Thyroid gland (tissue), 4 donors: ENCODE measurements at regions of chr1 and their contacts with region 1.

Region 1: GRCh38 chr1:94329986-94330385 is 88.2 kb upstream of the ABCD3 start:
- DNase-seq: no peak
- H3K4me3 ChIP-seq: no peak overlapping the region
- H3K27ac ChIP-seq: peak overlapping the region in 1 of 3 donors; percentile 2
- H3K4me1 ChIP-seq: peaks cover 35 to 50% of the 10 kb centered on the region in 2 donors
- H3K27me3 ChIP-seq: no peaks in the 10 kb centered on the region
- CTCF ChIP-seq: peak in 4 of 6 experiments; percentile 32 to 45 (median 41)
- POLR2A ChIP-seq: no peak

Region 2: GRCh38 chr1:94055459-94056122 is 274.4 kb before region 1 on chr1:
- intact Hi-C with region 1: loop called (anchors 5 kb)
- DNase-seq: no peak
- H3K4me3 ChIP-seq: no peak overlapping the region
- H3K27ac ChIP-seq: no peak overlapping the region
- H3K4me1 ChIP-seq: peaks cover 10 to 34% of the 10 kb centered on the region in 2 donors
- H3K27me3 ChIP-seq: no peaks in the 10 kb centered on the region
- CTCF ChIP-seq: no peak
- POLR2A ChIP-seq: no peak